Mammary epithelial cell (primary cell): ENCODE measurements at regions of chr2 and their contacts with region 1.

Region 1: DNA sequence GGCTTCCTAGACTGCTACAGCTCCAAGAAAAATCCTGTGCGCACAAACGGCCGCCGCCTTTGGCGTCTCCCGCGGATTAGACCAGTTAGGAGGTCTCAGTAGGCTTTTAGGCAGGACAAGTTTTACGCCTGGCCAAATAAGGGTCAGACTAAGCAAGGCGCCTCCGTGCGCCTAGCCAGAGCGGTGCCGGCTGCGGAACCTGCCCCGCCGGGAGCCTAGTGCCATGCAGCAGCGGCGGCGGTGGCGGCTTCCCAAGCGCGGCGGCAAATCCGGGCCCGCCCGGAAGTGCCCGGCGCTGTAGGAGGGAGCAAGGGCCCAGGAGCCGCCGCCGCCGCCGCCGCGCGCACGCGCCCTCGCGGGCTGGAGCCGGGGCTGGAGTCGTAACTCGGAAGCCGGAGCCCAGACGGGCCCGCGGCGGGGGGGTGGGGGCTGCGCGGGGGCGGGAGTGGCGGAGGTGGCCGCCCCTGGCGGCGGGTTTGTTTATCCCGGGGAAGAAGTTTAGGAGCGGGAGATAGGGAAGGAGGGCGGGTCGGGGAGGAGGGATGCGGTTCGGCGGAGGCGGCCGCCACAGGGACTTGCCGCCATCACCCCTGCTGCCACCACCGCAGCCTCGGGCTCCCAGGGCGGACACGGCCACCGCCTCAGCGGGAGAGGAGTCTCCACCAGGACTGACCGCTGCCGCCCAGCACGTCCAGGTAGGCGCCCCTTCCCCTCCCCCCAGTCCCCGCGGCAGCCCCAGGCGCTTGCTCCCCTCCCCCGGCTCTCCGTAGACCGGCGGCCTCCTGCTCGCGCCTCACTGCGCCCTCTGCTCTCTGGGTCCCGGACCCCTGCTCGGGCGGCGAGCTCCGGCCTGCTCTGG is at the start of gene SPOPL:
- DNase-seq: peak; percentile 91
- H3K4me3 ChIP-seq: peak within 1 kb of the TSS; percentile 90 to 98 (median 98)
- H3K27ac ChIP-seq: peak within 1 kb of the TSS; percentile 86
- H3K4me1 ChIP-seq: peaks cover 15% of the 10 kb centered on the region
- H3K27me3 ChIP-seq: no peaks in the 10 kb centered on the region
- CTCF ChIP-seq: peak in 1 of 2 donors; percentile 2
- total RNA-seq, gene SPOPL: 23.2 to 24.3 TPM

Region 2: GRCh38 chr2:138090330-138090729 is 411.3 kb before region 1 on chr2:
- CTCF ChIA-PET with region 1: no interaction called
- dilution Hi-C with region 1: no loop called
- in situ Hi-C with region 1: no loop called
- intact Hi-C with region 1: loop called (anchors 5 kb)
- DNase-seq: peak; percentile 56
- H3K4me3 ChIP-seq: no peak overlapping the region
- H3K27ac ChIP-seq: no peak overlapping the region
- H3K4me1 ChIP-seq: peaks cover 12% of the 10 kb centered on the region
- H3K27me3 ChIP-seq: no peaks in the 10 kb centered on the region
- CTCF ChIP-seq: peak; percentile 89 to 92

Region 3: DNA sequence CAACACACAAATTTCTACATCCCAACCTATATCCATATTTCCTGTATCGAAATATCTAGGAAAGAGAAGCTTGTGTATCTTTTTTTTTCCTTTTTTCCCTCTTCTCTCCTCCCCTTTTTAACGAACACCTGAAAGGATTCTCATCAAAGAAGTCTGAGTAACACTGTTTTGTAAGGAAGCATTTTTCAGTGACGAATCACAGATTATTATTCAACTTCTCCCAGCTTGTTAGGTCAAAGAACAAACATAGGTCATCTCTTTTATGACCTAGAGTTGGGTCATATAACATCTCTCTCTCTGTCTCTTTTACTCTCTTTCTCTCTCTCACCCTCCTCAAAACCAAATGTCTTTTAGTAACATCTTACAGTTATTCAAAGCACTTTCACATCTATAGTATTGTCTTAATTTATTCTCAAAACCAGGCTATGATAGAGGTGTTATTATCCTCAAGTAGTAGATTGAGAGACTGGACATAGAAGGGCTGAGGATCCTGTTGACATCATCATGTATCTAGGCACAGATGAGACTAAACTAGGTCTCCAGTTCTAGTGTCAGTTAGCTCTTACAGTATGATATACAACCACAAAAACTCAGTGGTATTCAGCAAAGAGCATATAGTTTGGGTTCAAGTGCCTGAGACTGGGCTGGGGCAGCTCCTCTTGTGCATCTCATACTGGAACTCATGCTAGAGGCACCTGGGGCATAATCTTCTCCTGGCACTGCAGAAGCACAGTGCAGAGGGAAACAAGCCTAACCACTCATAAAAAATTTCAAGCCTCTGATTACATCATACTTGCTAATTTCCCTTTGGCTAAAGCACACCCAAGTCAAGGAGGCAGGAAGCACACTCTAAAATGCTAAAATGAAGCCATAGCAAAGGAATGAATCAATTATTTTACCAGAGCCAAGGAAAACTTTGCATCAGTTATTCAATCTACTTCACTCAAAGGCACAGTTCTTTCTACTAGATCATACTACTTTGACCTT is 80.0 kb before region 1 on chr2:
- CTCF ChIA-PET with region 1: no interaction called
- dilution Hi-C with region 1: no loop called
- in situ Hi-C with region 1: no loop called
- intact Hi-C with region 1: loop called (anchors 2 kb)
- DNase-seq: peak; percentile 91
- H3K4me3 ChIP-seq: no peak overlapping the region
- H3K27ac ChIP-seq: peak overlapping the region; percentile 82
- H3K4me1 ChIP-seq: peaks cover 23% of the 10 kb centered on the region
- H3K27me3 ChIP-seq: no peaks in the 10 kb centered on the region
- CTCF ChIP-seq: no peak

Region 4: GRCh38 chr2:138536302-138536701 is 34.6 kb after region 1 on chr2:
- CTCF ChIA-PET with region 1: no interaction called
- dilution Hi-C with region 1: no loop called
- in situ Hi-C with region 1: no loop called
- intact Hi-C with region 1: no loop called
- DNase-seq: peak; percentile 64
- H3K4me3 ChIP-seq: no peak overlapping the region
- H3K27ac ChIP-seq: no peak overlapping the region
- H3K4me1 ChIP-seq: peaks cover 15% of the 10 kb centered on the region
- H3K27me3 ChIP-seq: no peaks in the 10 kb centered on the region
- CTCF ChIP-seq: no peak

Region 5: GRCh38 chr2:138632066-138632620 is 130.5 kb after region 1 on chr2:
- CTCF ChIA-PET with region 1: no interaction called
- dilution Hi-C with region 1: no loop called
- in situ Hi-C with region 1: no loop called
- intact Hi-C with region 1: loop called (anchors 2 kb)
- DNase-seq: peak; percentile 91
- H3K4me3 ChIP-seq: peak overlapping the region in 1 of 3 experiments; percentile 23
- H3K27ac ChIP-seq: peak overlapping the region; percentile 86
- H3K4me1 ChIP-seq: peaks cover 21% of the 10 kb centered on the region
- H3K27me3 ChIP-seq: no peaks in the 10 kb centered on the region
- CTCF ChIP-seq: no peak

Region 6: DNA sequence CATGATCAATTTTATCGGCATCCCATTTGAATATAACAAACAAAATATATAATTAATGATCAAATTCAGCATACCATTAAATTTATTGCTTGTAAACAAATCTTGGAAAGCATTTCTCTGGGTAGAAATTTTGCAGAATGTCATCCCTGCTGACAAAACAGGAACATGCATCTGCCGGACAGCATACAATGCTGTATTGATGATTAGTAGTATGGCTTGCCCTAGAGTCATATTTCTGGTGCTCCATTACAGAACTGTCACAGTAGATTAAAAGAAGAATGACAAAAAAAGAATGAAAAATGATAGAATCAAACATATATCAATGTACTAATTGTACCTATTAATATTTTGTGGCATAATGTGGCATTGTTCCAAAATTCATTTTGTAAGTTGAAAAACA is 180.5 kb after region 1 on chr2:
- CTCF ChIA-PET with region 1: no interaction called
- dilution Hi-C with region 1: no loop called
- in situ Hi-C with region 1: no loop called
- intact Hi-C with region 1: no loop called
- DNase-seq: no peak
- H3K4me3 ChIP-seq: no peak overlapping the region
- H3K27ac ChIP-seq: no peak overlapping the region
- H3K4me1 ChIP-seq: peaks cover 3% of the 10 kb centered on the region
- H3K27me3 ChIP-seq: no peaks in the 10 kb centered on the region
- CTCF ChIP-seq: no peak

Region 7: GRCh38 chr2:139271149-139271548 is 769.5 kb after region 1 on chr2:
- CTCF ChIA-PET with region 1: no interaction called
- dilution Hi-C with region 1: no loop called
- in situ Hi-C with region 1: no loop called
- intact Hi-C with region 1: no loop called
- DNase-seq: no peak
- H3K4me3 ChIP-seq: no peak overlapping the region
- H3K27ac ChIP-seq: no peak overlapping the region
- H3K4me1 ChIP-seq: no peaks in the 10 kb centered on the region
- H3K27me3 ChIP-seq: no peaks in the 10 kb centered on the region
- CTCF ChIP-seq: no peak